MCF 10A (cell line): ENCODE measurements at regions of chr3 and their contacts with region 1.

Region 1: DNA sequence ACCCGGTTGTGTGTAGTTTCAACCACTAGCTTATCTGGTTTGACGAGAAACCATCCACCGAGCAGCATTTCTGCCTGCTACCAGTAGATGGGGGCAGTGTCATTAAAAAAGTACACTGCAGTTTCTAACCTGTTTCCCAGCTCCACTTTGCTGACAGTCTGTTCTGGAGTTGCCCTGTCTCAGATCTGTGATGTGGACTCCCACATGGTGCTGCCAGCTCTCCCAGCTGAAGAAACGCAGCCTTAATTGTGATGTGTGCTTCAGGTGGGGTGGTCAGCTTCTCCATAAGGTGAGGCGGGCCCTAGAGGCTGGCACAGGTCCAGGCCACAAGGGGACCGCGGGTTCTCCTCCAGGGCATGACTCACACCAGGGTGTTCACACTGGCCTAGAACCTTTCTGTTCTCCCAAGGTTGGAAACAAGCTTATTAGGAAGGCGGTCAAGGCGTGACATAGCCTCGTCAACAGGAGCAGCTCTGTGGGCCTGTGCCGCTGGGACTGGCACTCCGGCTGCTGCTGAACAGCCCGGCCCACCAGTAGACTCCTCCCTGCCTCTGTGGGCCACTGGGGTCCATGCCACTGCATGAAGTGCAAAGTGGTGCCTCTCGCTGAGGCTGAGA is 2.9 kb upstream of the FAM43A start:
- DNase-seq: peak; percentile 86
- H3K4me3 Mint-ChIP-seq: no peak overlapping the region
- H3K27ac Mint-ChIP-seq: no peak overlapping the region
- H3K4me1 Mint-ChIP-seq: peaks cover 17% of the 10 kb centered on the region
- H3K27me3 Mint-ChIP-seq: no peaks in the 10 kb centered on the region
- CTCF ChIP-seq: peak; percentile 84

Region 2: DNA sequence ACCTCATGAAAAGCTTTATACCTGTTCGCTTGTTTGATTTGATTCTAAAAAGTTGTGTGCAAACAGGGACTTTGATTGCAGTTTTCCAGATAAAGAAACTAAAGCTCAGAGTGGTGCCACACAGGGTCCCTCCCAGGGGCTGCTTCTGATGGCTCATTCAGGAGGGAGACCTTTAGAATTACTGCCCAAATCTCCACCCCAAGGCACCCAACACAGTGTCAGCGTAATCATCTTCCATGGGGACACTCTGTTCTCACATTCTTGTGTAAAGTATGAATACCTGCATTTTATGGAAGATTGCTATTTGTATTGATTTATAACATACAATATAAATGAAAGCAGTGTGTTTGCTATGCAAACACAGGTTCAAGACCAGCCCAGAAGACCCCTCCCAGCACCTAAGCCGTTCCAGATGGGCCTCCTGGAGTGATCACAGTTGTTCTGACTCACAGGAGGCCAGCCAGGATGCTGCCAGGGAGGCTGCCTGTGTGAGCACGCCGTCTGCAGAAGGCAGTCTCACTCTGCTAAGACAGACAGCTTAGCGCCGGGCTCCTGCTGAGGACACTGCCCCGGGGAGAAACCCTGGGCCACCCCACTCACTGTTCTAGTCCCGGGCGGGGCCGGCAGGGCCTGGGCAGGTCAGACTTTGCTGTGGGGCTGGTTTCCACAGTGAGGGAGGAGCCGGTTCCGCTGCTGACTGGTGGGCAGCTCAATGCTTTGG is 188.5 kb after region 1 on chr3:
- CTCF ChIA-PET with region 1: interaction called, 21 read pairs
- POLR2A ChIA-PET with region 1: interaction called, 35 read pairs
- intact Hi-C with region 1: loop called (anchors 2 kb)
- DNase-seq: peak; percentile 93
- H3K4me3 Mint-ChIP-seq: peak overlapping the region; percentile 71
- H3K27ac Mint-ChIP-seq: peak overlapping the region; percentile 82
- H3K4me1 Mint-ChIP-seq: peaks cover 36% of the 10 kb centered on the region
- H3K27me3 Mint-ChIP-seq: no peaks in the 10 kb centered on the region
- CTCF ChIP-seq: no peak

Region 3: GRCh38 chr3:195001961-195002861 is 319.4 kb after region 1 on chr3:
- CTCF ChIA-PET with region 1: interaction called, 4 read pairs
- POLR2A ChIA-PET with region 1: no interaction called
- intact Hi-C with region 1: loop called (anchors 1 kb)
- DNase-seq: peak; percentile 71
- H3K4me3 Mint-ChIP-seq: no peak overlapping the region
- H3K27ac Mint-ChIP-seq: no peak overlapping the region
- H3K4me1 Mint-ChIP-seq: peaks cover 6% of the 10 kb centered on the region
- H3K27me3 Mint-ChIP-seq: peaks cover 25% of the 10 kb centered on the region
- CTCF ChIP-seq: no peak

Region 4: DNA sequence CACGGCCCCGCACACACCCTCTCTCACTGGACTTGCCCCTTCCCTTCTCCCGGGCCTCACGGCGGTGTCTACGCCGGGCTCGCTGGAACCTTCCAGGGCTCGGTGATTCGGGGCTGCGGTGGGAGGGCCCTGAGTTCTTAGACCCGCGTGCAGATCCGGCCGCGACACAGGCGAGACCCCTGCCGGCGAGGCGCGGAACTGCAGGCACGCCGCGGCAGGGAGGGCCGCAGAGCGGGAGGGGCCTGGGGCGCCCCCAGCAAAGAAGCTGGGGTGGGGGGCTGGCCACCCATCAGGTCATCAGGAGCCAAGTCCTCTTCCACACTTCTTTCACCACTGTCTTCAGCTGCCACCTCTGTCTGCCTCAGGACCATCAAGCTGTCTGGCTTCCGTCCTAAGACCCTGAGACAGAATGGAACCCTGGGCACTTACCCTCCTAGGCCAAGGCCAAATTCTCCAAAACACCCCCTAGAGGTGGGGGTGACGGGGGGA is 423.7 kb after region 1 on chr3:
- CTCF ChIA-PET with region 1: interaction called, 45 read pairs
- POLR2A ChIA-PET with region 1: interaction called, 5 read pairs
- intact Hi-C with region 1: loop called (anchors 1 kb)
- DNase-seq: peak; percentile 34
- H3K4me3 Mint-ChIP-seq: peak overlapping the region; percentile 61
- H3K27ac Mint-ChIP-seq: no peak overlapping the region
- H3K4me1 Mint-ChIP-seq: peaks cover 15% of the 10 kb centered on the region
- H3K27me3 Mint-ChIP-seq: no peaks in the 10 kb centered on the region
- CTCF ChIP-seq: peak; percentile 93

Region 5: GRCh38 chr3:195259475-195260279 is 576.9 kb after region 1 on chr3:
- CTCF ChIA-PET with region 1: interaction called, 69 read pairs
- POLR2A ChIA-PET with region 1: interaction called, 12 read pairs
- intact Hi-C with region 1: loop called (anchors 1 kb)
- DNase-seq: peak; percentile 94
- H3K4me3 Mint-ChIP-seq: peak overlapping the region; percentile 67
- H3K27ac Mint-ChIP-seq: no peak overlapping the region
- H3K4me1 Mint-ChIP-seq: peaks cover 11% of the 10 kb centered on the region
- H3K27me3 Mint-ChIP-seq: no peaks in the 10 kb centered on the region
- CTCF ChIP-seq: peak; percentile 86

Region 6: DNA sequence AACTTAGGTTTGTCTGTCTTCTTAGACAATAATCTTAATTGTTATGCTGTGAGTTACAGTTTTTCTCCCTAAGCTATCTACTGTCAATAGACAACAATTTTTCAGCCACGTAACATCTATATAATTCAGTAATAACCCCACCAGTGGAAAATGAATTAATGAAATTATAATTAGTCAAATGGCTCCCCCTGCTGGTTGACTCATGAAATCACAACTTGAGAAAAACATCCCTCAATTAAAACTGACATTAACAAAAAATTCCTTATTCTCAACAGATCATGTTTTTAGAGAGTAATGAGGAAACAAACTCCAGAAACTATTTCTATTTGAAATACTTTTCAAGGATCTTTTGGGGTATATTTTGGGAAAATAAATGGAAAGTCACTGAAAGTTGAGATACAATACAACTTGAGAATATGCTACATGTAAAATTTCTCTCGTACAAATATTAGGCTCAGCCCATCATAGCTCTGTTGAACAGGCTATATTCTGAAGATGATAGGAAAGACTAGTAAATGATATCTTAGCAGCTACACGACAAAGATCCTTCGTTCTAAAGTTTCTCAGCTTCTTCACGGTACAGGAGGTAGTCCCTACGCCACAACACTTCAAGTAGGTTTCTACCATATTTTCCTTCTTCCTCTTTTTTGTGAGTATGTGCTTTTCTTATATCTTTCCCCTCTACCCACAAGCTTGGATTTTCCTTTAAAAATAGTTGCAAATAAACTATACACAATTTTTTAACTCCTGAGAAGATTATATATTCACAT is 839.6 kb after region 1 on chr3:
- CTCF ChIA-PET with region 1: interaction called, 10 read pairs
- POLR2A ChIA-PET with region 1: no interaction called
- intact Hi-C with region 1: no loop called
- DNase-seq: peak; percentile 59
- H3K4me3 Mint-ChIP-seq: no peak overlapping the region
- H3K27ac Mint-ChIP-seq: no peak overlapping the region
- H3K4me1 Mint-ChIP-seq: no peaks in the 10 kb centered on the region
- H3K27me3 Mint-ChIP-seq: no peaks in the 10 kb centered on the region
- CTCF ChIP-seq: peak; percentile 53